ENCODE measurements at regions of chr22 and their contacts with region 1.

Region 1: DNA sequence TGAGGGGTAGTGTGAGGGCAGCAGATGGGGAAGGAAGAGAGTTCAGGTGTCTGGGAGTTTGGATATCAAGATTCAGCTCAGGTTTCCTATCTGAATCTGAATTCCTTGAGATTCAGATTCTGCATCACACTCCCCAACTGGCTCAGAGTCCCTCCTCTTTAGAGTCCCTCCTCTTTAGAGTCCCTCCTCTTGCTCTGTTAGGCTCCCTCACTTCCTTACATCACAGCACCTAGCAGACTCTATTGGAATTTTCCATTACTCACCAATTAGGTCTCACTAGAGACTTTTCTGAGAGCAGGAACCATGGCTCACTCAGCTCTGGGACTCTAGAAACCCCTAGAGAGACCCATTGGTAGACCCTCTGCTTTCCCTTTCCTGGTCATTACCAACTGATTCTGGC is 303.4 kb upstream of the SYN3 start:
- DNase-seq: no peak

Region 2: DNA sequence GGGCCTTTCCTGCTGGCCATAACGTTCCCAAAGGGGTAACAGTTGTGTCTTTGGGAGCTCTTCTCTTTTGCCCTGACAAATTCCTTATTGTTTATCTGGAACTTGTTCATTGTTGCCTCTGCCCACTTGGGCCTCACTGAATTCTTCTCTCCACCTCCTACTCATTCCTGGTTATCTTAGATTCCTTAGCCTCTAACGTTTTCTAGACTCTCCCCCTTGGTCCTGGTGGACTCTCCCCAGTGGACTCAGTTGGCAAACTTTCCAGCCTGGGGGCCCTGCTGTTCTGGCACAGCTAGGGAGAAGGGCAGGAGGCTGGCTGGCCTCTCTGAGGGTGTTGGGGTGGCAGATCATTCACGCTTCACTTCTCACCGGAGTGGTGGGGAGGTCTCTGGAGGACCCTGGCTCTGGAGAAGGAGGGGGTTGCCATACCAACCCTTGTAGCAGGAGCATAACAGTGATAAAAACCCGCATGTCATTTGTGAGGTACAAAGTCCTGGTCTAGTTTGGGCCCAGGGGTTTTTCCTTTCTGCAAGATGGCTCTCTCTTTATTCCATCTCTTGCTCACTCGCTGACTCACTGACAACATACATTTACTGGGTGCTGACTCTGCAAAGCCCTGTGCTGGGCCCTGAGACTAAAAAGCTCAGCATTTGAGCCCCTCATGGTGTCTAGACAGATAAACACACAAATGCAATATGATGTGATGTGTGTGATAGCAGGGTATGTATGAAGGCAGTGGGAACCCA is 1377.5 kb before region 1 on chr22:
- intact Hi-C with region 1: loop called in 1 of 2 experiments (anchors 5 kb)
- DNase-seq: peak; percentile 47

Region 3: GRCh38 chr22:31991102-31991839 is 1370.3 kb before region 1 on chr22:
- intact Hi-C with region 1: loop called in 1 of 2 experiments (anchors 5 kb)
- DNase-seq: no peak

Measured in posterior vena cava (tissue), 2 donors.